Endothelial cell of umbilical vein (primary cell): ENCODE measurements at regions of chr3 and their contacts with region 1.

Region 1: DNA sequence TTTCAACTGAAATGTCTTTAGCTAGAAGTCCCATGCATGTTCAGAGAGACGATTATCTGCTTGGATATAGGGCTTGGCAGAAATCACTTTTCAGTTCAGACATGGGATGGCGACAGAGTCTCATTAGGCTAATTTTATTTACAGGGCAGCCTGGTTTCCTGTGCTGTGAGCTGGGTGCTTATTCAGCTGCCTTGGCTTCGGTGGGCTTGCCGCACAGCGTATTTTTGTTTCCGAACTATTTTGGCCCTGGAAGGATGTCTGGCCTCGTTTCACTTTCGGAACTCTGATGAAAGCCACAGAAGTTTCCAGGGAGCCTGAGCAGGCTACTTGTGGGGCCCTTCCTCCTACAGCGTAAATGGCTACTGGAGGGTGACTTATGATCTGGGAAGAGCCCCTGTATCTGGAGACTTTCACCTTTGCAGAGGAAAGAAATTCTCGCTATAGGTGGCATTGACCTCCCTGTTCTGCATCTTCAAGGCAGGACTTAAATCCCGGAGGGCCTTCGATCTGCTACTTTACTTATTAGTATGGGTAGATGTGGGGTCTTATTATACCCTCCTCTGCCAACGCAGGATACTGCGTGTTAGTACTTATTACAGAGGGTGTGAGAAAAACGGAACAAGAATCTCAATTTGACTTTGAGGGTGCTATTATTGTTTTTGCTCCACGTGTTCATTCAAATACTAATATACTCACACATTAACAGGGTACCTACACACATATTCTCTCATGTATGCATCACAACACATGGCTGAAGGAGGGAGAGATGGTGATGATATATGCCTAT is 364.0 kb upstream of the RBMS3 start:
- DNase-seq: peak; percentile 96
- H3K4me3 ChIP-seq: peak overlapping the region; percentile 3 to 73 (median 45)
- H3K27ac ChIP-seq: peak overlapping the region; percentile 57
- H3K4me1 ChIP-seq: peaks cover 9% of the 10 kb centered on the region
- H3K27me3 ChIP-seq: no peaks in the 10 kb centered on the region
- CTCF ChIP-seq: peak; percentile 65 to 71
- POLR2A ChIP-seq: no peak

Region 2: DNA sequence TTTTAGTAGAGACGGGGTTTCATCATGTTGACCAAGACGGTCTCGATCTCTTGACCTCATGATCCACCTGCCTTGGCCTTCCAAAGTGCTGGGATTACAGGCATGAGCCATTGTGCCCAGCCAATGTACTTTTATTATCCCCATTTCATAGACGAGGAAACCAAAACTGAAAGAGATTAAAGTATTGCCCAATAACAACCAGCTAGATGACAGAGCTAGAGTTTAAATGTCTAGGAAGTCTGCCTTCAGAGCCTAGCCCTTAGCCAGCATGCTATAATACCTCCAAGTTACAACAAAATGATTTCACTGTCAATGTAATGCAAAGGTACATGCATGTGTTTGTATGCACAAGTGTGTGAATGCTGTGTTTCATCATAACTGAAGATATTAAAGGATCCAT is 25.4 kb before region 1 on chr3:
- CTCF ChIA-PET with region 1: no interaction called
- POLR2A ChIA-PET with region 1: no interaction called
- dilution Hi-C with region 1: no loop called
- intact Hi-C with region 1: no loop called
- DNase-seq: no peak
- H3K4me3 ChIP-seq: no peak overlapping the region
- H3K27ac ChIP-seq: no peak overlapping the region
- H3K4me1 ChIP-seq: no peaks in the 10 kb centered on the region
- H3K27me3 ChIP-seq: peaks cover 0 to 3% of the 10 kb centered on the region in 2 experiments
- CTCF ChIP-seq: no peak
- POLR2A ChIP-seq: no peak

Region 3: GRCh38 chr3:29065211-29065785 is 148.4 kb after region 1 on chr3:
- CTCF ChIA-PET with region 1: interaction called, 10 read pairs
- POLR2A ChIA-PET with region 1: no interaction called
- dilution Hi-C with region 1: no loop called
- intact Hi-C with region 1: loop called (anchors 1 kb)
- DNase-seq: peak; percentile 100
- H3K4me3 ChIP-seq: no peak overlapping the region
- H3K27ac ChIP-seq: peak overlapping the region; percentile 71
- H3K4me1 ChIP-seq: peaks cover 17% of the 10 kb centered on the region
- H3K27me3 ChIP-seq: no peaks in the 10 kb centered on the region
- CTCF ChIP-seq: no peak
- POLR2A ChIP-seq: no peak

Region 4: DNA sequence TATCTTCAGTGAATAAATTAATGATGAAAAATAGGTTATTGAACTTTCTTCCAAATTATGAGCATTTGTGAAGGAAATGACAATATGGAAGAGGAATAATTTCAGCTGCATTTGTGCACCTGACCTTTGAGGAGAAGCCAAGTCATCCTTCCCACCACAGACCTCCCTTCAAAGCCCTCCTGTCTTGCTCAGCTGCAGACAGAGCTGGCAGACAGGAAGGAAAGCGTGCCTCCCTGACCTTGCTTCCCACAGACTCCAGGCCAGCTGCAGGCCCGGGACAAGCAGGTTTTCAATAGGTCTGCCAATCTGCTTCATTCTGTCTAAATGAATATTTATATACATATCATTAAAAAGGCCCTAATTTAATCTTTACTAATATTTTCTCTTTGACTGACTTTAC is 211.1 kb after region 1 on chr3:
- CTCF ChIA-PET with region 1: interaction called, 9 read pairs
- POLR2A ChIA-PET with region 1: no interaction called
- dilution Hi-C with region 1: no loop called
- intact Hi-C with region 1: loop called (anchors 1 kb)
- DNase-seq: peak; percentile 90
- H3K4me3 ChIP-seq: no peak overlapping the region
- H3K27ac ChIP-seq: peak overlapping the region; percentile 47
- H3K4me1 ChIP-seq: peaks cover 15% of the 10 kb centered on the region
- H3K27me3 ChIP-seq: no peaks in the 10 kb centered on the region
- CTCF ChIP-seq: no peak
- POLR2A ChIP-seq: no peak

Region 5: DNA sequence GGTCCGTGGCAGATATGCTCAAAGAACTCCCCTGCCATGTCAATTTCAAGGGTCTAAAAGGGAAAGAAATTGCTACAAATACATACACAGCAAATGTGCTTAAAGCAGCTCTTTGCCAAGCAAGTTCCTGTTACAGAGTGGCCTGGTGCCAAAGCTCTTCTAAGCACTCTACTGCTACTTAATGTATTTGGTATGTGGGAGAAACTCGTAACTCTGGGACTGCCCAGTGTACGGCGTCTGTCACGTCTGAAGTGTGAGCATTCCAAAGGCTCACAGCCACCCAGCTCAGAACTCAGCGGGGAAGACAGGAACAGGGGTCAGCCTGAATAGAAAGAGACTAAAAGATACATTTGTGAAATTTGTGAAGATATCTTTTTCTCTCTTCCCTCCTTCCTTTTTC is 418.5 kb after region 1 on chr3:
- CTCF ChIA-PET with region 1: interaction called, 12 read pairs
- POLR2A ChIA-PET with region 1: no interaction called
- dilution Hi-C with region 1: no loop called
- intact Hi-C with region 1: loop called (anchors 5 kb)
- DNase-seq: peak; percentile 92
- H3K4me3 ChIP-seq: peak overlapping the region in 2 of 3 experiments; percentile 19 to 42
- H3K27ac ChIP-seq: peak overlapping the region; percentile 76
- H3K4me1 ChIP-seq: peaks cover 40% of the 10 kb centered on the region
- H3K27me3 ChIP-seq: no peaks in the 10 kb centered on the region
- CTCF ChIP-seq: no peak
- POLR2A ChIP-seq: no peak

Region 6: DNA sequence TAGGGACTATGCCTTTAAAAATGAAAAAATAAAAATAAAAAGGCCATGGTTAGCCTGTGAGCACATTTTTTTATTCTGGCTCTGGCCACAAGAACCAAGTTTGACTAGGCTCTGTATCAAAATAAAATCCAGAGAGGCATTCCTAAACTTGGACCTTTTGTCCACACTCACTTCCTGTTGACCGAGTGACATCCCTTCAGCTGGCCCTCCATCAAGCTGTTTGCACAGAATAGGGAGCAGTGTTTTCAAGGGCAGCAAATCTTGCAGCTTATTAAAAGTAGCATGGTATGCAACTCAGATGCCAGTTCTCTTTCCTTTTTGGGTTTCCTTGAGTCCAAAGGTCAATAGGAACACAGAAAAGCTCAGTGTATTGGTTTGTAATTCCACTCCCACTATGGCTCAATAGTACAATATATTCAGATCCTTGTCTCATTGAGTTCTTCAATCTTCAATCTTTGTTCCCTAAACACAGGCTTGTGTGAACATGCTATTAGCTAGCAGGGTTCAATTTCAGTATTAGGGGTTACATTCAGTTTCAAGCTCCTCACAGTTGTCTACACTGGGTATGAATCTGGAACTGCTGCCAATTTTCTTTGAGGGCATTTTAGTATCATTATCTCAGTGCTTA is 608.5 kb after region 1 on chr3:
- CTCF ChIA-PET with region 1: interaction called, 6 read pairs
- POLR2A ChIA-PET with region 1: no interaction called
- dilution Hi-C with region 1: no loop called
- intact Hi-C with region 1: loop called (anchors 1 kb)
- DNase-seq: peak; percentile 93
- H3K4me3 ChIP-seq: no peak overlapping the region
- H3K27ac ChIP-seq: peak overlapping the region; percentile 64
- H3K4me1 ChIP-seq: peaks cover 25% of the 10 kb centered on the region
- H3K27me3 ChIP-seq: no peaks in the 10 kb centered on the region
- CTCF ChIP-seq: no peak
- POLR2A ChIP-seq: peak; percentile 48

Region 7: DNA sequence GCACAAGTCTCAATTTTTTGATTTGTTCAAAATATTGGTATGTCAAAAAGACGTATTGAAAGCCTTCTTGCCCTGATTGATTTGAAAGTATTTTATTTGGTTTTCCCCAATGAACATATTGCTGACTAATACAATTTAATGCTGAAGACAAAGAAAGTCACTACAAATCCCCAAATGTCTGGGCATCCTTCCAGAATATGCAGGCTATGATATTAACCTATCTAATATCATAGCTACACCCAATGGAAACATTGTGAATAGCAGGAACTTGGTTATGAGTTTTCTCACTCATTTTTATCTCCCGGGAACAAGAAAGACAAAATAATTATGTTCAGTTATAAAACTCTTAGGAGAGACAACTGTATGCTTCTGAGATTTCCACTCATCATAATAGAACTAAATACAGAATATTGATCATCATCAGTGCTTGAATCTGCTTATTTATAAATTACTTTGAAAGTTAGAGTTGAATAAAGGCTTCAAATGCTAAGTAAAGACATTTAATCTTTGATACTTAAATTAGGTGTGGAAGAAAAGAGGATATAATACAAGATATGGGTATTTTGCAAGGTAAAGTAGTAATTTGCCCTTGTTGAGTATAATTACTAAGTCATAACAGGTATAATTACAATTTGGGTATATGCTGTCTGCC is 847.8 kb after region 1 on chr3:
- CTCF ChIA-PET with region 1: interaction called, 66 read pairs
- POLR2A ChIA-PET with region 1: no interaction called
- dilution Hi-C with region 1: no loop called
- intact Hi-C with region 1: loop called (anchors 1 kb)
- DNase-seq: peak; percentile 83
- H3K4me3 ChIP-seq: no peak overlapping the region
- H3K27ac ChIP-seq: no peak overlapping the region
- H3K4me1 ChIP-seq: peaks cover 14% of the 10 kb centered on the region
- H3K27me3 ChIP-seq: no peaks in the 10 kb centered on the region
- CTCF ChIP-seq: peak; percentile 36 to 47
- POLR2A ChIP-seq: no peak